Activated T-helper 1 cell treated with anti-CD3 and anti-CD28 coated beads, Interleukin-12 subunit alpha, Interleukin-12 subunit beta, Interleukin-2, Interleukin-4 antibody, amounts not matched to agents 30 ng/mL and 10 ng/mL and 1 ng/mL, durations not matched to agents 14 hours and 24 hours and 36 hours (primary cell): ENCODE measurements at regions of chr19 and their contacts with region 1.

Region 1: DNA sequence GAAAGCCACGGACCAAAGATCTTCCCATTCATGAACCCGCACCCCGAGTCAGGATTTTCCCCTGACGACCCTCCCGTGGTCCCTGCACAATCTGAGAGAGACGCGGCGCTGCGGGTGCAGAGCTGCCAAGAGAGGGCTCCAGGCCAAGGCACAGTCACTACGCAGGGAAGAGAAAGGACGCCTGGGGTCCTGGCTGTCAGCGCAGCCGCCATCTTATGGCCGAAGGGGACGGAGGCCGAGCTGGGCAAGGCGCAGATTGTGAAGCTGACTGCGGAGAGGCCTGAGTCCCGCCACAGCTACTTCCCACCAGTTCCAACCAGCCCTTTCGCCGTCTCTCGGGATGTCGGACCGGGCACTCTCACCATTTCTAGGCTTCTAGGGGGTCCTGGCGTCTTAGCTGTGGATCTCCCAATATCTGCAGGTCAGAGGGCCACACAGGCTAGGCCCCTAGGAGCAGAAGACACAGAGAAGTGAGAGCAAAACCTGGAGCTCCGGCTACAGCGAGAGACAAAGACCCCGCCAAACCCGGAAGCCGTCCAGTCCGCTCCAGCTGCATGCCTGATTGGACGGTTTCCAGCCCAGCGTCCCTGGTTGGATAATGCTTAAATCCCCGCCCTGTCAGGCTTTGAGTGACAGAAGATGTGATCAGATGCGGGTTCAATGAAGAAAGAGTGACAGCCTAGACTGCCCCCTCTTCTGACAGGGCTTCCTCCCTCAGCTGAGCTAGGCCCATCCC is at the start of gene ZNF100:
- DNase-seq: peak; percentile 80
- H3K4me3 Mint-ChIP-seq: peak within 1 kb of the TSS; percentile 94
- H3K27ac Mint-ChIP-seq: peak within 1 kb of the TSS; percentile 85
- H3K4me1 Mint-ChIP-seq: peaks cover 35% of the 10 kb centered on the region
- H3K27me3 Mint-ChIP-seq: no peaks in the 10 kb centered on the region
- total RNA-seq, gene ZNF100: 20.6 and 21.8 TPM in 2 replicates

Region 2: DNA sequence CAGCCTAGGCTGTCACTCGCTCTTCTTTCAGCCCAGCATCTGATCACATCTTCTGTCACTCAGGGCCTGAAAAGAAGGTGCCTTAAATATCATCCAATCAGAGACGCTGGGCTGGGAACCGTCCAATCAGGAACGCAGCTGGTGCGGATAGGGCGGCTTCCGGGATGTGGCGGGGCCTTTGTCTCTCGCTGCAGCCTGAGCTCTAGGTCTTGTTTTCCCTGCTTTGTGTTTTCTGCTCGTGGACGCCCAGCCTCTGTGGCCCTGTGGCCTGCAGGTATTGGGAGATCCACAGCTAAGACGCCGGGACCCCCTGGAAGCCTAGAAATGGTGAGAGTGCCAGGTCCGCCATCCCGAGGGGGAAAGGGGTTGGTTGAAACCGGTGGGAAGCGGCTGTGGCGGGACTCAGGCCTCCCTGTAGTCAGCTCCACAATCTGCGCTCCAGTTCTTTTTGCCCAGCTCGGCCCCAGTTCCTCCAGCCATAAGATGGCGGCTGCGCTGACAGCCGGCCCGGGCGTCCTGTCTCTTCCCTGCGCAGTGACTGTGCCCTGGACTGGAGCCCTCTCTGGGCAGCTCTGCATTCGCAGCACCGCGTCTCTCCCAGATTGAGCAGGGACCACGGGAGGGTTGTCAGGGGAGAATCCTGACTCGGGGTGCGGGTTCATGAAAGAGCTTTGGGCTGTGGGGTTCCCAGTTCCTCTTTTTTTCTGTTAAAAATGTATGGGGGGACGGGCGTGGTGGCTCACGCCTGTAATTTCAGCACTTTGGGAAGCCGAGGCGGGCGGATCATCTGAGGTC is 844.0 kb before region 1 on chr19 and contains the start of gene ZNF85:
- intact Hi-C with region 1: loop called (anchors 5 kb)
- DNase-seq: peak; percentile 85
- H3K4me3 Mint-ChIP-seq: peak within 1 kb of the TSS; percentile 94
- H3K27ac Mint-ChIP-seq: peak within 1 kb of the TSS; percentile 92
- H3K4me1 Mint-ChIP-seq: no peaks in the 10 kb centered on the region
- H3K27me3 Mint-ChIP-seq: no peaks in the 10 kb centered on the region
- total RNA-seq, gene ZNF85: 10.0 and 11.1 TPM in 2 replicates

Region 3: DNA sequence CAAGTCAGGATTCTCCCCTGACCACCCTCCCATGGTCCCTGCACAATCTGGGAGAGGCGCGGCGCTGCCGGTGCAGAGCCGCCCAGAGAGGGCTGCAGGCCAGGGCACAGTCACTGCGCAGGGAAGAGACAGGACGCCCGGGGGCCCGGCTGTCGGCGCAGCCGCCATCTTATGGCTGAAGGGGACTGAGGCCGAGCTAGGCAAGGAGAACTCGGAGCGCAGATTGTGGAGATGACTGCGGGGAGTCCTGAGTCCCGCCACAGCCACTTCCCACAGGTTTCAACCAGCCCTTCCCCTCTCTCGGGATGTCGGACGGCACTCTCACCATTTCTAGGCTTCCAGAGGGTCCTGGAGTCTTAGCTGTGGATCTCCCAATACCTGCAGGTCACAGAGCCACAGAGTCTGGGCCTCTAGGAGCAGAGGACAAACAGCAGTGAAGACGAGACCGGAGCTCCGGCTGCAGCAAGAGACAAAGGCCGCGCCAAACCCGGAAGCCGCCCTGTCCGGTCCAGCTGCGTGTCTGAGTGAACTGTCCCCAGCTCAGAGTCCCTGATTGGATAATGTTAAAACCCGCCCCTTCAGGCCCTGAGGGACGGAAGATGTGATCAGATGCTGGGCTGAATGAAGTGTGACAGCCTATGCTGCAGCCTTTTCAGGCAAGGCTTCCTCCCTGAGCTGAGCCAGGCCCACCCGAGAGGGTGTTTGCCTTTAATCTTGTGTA is 438.2 kb before region 1 on chr19 and contains the start of gene ZNF708:
- intact Hi-C with region 1: loop called (anchors 10 kb)
- DNase-seq: peak; percentile 78
- H3K4me3 Mint-ChIP-seq: peak within 1 kb of the TSS; percentile 96
- H3K27ac Mint-ChIP-seq: peak within 1 kb of the TSS; percentile 98
- H3K4me1 Mint-ChIP-seq: peaks cover 13% of the 10 kb centered on the region
- H3K27me3 Mint-ChIP-seq: no peaks in the 10 kb centered on the region
- total RNA-seq, gene ZNF708: 9.6 and 9.9 TPM in 2 replicates

Region 4: DNA sequence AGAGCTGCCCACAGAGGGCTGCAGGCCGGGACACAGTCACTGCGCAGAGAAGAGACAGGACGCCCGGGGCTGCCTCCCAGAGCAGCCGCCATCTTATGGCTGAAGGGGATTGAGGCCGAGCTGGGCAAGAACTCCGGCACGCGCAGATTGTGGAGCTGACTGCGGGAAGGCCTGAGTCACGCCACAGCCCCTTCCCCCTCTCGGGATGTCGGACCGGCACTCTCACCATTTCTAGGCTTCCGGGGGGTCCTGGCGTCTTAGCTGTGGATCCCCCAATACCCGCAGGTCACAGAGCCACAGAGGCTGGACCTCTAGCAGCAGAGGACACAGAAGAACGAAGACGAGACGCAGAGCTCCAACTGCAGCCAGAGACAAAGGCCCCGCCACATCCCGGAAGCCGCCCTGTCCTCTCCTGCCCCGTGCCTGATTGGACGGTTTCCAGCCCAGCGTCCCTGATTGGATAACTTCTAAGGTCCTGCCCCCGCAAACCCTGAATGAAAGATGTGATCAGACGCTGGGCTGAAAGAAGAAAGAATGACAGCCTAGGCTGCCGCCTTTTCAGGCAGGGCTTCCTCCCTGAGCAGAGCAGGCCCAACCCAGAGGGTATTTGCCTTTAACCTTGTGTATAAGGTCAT is 68.7 kb after region 1 on chr19 and contains the start of gene ZNF43:
- intact Hi-C with region 1: loop called (anchors 1 kb)
- DNase-seq: peak; percentile 87
- H3K4me3 Mint-ChIP-seq: peak within 1 kb of the TSS; percentile 98
- H3K27ac Mint-ChIP-seq: peak within 1 kb of the TSS; percentile 98
- H3K4me1 Mint-ChIP-seq: peaks cover 2% of the 10 kb centered on the region
- H3K27me3 Mint-ChIP-seq: peaks cover 2% of the 10 kb centered on the region
- total RNA-seq, gene ZNF43: 29.9 and 30.5 TPM in 2 replicates

Region 5: GRCh38 chr19:22052644-22053013 is 285.4 kb after region 1 on chr19:
- intact Hi-C with region 1: loop called (anchors 5 kb)
- DNase-seq: no peak
- H3K4me3 Mint-ChIP-seq: peak overlapping the region; percentile 92
- H3K27ac Mint-ChIP-seq: peak overlapping the region; percentile 57
- H3K4me1 Mint-ChIP-seq: no peaks in the 10 kb centered on the region
- H3K27me3 Mint-ChIP-seq: no peaks in the 10 kb centered on the region